ENCODE measurements at regions of chr12 and their contacts with region 1.

Region 1: GRCh38 chr12:45728630-45729232 is 775 bp upstream of the ARID2 start:
- DNase-seq: peak; percentile 98
- ATAC-seq: peak; percentile 68
- H3K4me3 Mint-ChIP-seq: peak overlapping the region; percentile 99
- H3K27ac Mint-ChIP-seq: peak overlapping the region; percentile 98
- H3K4me1 Mint-ChIP-seq: peaks cover 18% of the 10 kb centered on the region
- H3K27me3 Mint-ChIP-seq: no peaks in the 10 kb centered on the region

Region 2: DNA sequence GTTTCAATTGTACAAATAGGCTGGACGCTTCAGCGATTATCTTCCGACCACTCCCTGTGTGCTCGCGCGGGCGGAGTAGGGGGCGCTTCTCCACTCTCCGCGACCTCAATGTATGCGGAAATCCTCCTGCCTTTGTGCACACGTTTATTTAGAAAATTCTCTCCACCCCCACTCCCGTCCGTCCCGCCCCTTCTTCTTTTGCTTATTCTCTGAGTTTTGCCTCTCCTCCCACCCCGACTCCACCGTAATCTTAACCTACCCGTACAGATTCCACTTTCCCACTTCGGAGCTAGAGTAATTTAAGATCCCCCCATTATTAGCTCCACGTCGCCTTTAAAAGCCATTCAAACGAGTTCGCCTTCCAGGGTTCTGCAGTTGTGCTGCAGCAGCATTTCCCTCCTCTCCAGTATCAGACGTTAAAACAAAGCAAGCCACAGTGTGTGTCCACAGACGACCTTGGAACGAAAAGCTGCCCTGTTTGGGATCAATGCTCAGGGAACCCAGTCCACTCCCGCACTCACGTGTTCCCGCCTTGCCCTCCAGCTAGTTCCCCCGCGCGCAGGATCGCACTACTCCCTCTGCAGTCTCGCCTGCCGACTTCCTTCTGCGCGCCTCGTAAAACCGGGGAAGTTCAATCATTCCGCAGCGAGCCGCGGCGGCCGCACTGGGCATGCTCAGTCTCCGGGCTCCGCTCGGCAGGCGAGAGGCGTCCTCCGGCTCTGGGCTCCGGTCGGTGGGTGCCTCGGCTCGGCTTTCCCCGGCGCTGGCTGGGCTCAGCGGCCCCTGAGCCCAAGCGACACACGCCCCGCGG is 513.1 kb before region 1 on chr12 and contains the start of gene ANO6:
- POLR2A ChIA-PET with region 1: interaction called, 13 read pairs
- DNase-seq: peak; percentile 81
- ATAC-seq: peak; percentile 70
- H3K4me3 Mint-ChIP-seq: peak within 1 kb of the TSS; percentile 96
- H3K27ac Mint-ChIP-seq: peak within 1 kb of the TSS; percentile 89
- H3K4me1 Mint-ChIP-seq: peaks cover 38% of the 10 kb centered on the region
- H3K27me3 Mint-ChIP-seq: no peaks in the 10 kb centered on the region
- total RNA-seq, gene ANO6: 23.1 to 24.4 TPM

Region 3: GRCh38 chr12:45543906-45544315 is 184.8 kb before region 1 on chr12:
- POLR2A ChIA-PET with region 1: interaction called, 35 read pairs
- DNase-seq: no peak
- ATAC-seq: peak; percentile 87
- H3K4me3 Mint-ChIP-seq: no peak overlapping the region
- H3K27ac Mint-ChIP-seq: no peak overlapping the region
- H3K4me1 Mint-ChIP-seq: no peaks in the 10 kb centered on the region
- H3K27me3 Mint-ChIP-seq: no peaks in the 10 kb centered on the region

Region 4: DNA sequence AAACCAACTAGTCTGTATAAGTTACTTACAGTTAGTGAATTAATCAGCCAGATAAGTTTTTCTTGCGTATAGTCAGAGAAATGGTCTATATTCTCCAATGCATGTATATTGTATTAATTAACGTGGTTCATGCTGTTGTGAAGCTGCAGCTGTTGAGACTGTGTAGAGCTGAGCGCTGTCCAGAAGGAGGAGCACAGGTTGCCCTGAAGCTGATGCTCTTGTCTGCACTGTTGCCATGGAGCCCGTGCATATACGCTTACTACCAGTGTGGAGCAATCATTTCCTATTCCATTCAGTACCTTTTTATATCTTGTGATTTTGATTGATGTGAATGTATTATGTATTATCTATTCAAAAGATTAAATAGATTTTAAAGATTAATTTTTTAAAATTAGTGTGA is 73.5 kb before region 1 on chr12:
- POLR2A ChIA-PET with region 1: interaction called, 62 read pairs
- DNase-seq: peak; percentile 39
- ATAC-seq: peak; percentile 100
- H3K4me3 Mint-ChIP-seq: no peak overlapping the region
- H3K27ac Mint-ChIP-seq: no peak overlapping the region
- H3K4me1 Mint-ChIP-seq: peaks cover 20% of the 10 kb centered on the region
- H3K27me3 Mint-ChIP-seq: peaks cover 3% of the 10 kb centered on the region

Region 5: GRCh38 chr12:45663455-45663854 is 65.3 kb before region 1 on chr12:
- POLR2A ChIA-PET with region 1: interaction called, 120 read pairs
- DNase-seq: no peak
- ATAC-seq: peak; percentile 73
- H3K4me3 Mint-ChIP-seq: peak overlapping the region; percentile 59
- H3K27ac Mint-ChIP-seq: peak overlapping the region; percentile 40
- H3K4me1 Mint-ChIP-seq: peaks cover 47% of the 10 kb centered on the region
- H3K27me3 Mint-ChIP-seq: no peaks in the 10 kb centered on the region

Region 6: DNA sequence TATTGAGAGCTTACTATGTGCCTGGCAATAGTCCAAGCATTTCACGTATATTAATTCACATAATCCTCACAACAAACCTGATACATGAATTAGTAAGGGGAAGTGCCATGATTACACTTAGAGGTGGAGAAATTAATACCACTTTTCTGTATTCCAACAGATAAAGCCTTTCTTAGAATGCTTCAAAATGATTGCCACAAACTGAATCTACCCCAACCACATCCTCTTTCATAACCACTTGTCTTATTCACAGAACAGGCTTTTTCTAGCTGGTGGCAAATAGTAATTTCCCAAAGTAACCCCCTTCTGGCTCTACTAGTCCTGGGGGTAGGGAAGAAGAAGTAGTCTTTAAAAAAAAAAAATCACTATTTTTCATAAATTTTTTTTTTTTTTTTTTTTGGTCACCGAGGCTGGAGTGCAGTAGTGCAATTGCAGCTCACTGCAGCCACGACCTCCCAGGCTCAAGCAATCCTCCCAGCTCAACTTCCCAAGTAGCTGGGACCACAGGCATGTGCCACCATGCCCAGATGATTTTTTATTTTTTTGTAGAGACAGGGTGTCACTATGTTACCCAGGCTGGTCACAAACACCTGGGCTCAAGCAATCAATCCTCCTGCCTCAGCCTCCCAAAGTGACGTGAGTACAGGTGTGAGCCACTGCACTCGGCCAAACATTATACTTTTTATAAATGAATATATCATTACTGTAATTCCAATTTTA is 58.2 kb before region 1 on chr12:
- POLR2A ChIA-PET with region 1: interaction called, 120 read pairs
- DNase-seq: peak; percentile 38
- ATAC-seq: peak; percentile 68
- H3K4me3 Mint-ChIP-seq: peak overlapping the region; percentile 58
- H3K27ac Mint-ChIP-seq: peak overlapping the region; percentile 73
- H3K4me1 Mint-ChIP-seq: peaks cover 38% of the 10 kb centered on the region
- H3K27me3 Mint-ChIP-seq: no peaks in the 10 kb centered on the region

Region 7: DNA sequence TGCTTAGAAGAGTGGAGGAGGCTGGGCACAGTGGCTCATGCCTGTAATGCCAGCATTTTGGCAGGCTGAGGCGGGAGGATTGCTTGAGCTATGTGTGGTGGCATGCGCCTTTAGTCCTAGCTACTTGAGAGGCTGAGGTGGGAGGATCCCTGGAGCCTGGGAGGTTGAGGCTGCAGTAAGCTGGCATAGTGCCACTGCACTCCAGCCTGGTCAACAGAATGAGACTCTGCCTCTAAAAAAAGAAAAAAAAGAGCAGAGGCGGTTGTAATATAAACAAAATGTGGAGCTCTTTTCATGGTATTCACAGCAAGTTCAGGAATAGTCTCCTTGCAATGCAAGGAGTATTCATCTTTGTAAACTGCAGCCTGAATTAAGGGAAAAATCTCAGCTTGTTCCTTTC is 27.9 kb after region 1 on chr12:
- POLR2A ChIA-PET with region 1: no interaction called
- DNase-seq: no peak
- ATAC-seq: no peak
- H3K4me3 Mint-ChIP-seq: no peak overlapping the region
- H3K27ac Mint-ChIP-seq: no peak overlapping the region
- H3K4me1 Mint-ChIP-seq: peaks cover 9% of the 10 kb centered on the region
- H3K27me3 Mint-ChIP-seq: no peaks in the 10 kb centered on the region

Region 8: GRCh38 chr12:45990468-45991283 is 261.9 kb after region 1 on chr12 and contains the start of gene SCAF11:
- POLR2A ChIA-PET with region 1: interaction called, 46 read pairs
- DNase-seq: peak; percentile 100
- ATAC-seq: peak; percentile 82
- H3K4me3 Mint-ChIP-seq: peak within 1 kb of the TSS; percentile 98
- H3K27ac Mint-ChIP-seq: peak within 1 kb of the TSS; percentile 100
- H3K4me1 Mint-ChIP-seq: peaks cover 40% of the 10 kb centered on the region
- H3K27me3 Mint-ChIP-seq: peaks cover 5% of the 10 kb centered on the region
- total RNA-seq, gene SCAF11: 157 to 161 TPM

Measured in activated naive CD8-positive, alpha-beta T cell treated with anti-CD3 and anti-CD28 coated beads, Interleukin-2, amount 10 ng/mL, durations not matched to agents 7 days and 5 days (primary cell).